ENCODE measurements at regions of chrX and their contacts with region 1.

Region 1: GRCh38 chrX:153971450-153972367 is at the start of gene HCFC1:
- DNase-seq: peak; percentile 92
- H3K4me3 Mint-ChIP-seq: peak within 1 kb of the TSS; percentile 100
- H3K27ac Mint-ChIP-seq: peak within 1 kb of the TSS; percentile 100
- H3K4me1 Mint-ChIP-seq: peaks cover 30% of the 10 kb centered on the region
- H3K27me3 Mint-ChIP-seq: no peaks in the 10 kb centered on the region
- total RNA-seq, gene HCFC1: 90.4 to 93.0 TPM

Region 2: DNA sequence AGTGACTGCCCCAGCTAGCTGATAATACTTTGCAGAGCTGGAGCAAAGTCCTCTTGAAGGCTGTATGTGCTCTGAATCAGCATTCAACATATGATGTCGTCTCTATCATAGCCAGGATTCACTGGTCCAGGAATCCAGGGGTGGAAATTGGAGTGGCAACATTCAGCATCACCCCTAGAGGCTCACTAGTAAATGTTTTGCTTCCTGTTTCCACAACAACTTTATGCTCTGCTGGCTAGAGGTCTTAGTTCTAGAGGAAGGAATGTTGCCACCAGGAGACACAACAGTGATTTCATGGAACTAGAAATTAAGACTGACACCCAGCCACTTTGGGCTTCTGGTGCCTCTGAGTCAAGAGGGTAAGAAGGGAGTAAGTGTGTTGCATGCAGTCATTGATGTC is 781.3 kb before region 1 on chrX:
- CTCF ChIA-PET with region 1: no interaction called
- POLR2A ChIA-PET with region 1: no interaction called
- intact Hi-C with region 1: no loop called
- DNase-seq: no peak
- H3K4me3 Mint-ChIP-seq: no peak overlapping the region
- H3K27ac Mint-ChIP-seq: no peak overlapping the region
- H3K4me1 Mint-ChIP-seq: no peaks in the 10 kb centered on the region
- H3K27me3 Mint-ChIP-seq: peaks cover 2% of the 10 kb centered on the region

Region 3: GRCh38 chrX:153724252-153725040 is 247.3 kb before region 1 on chrX and contains the starts of genes ABCD1 and BCAP31:
- CTCF ChIA-PET with region 1: no interaction called
- POLR2A ChIA-PET with region 1: no interaction called
- intact Hi-C with region 1: loop called (anchors 1 kb)
- DNase-seq: peak; percentile 91
- H3K4me3 Mint-ChIP-seq: peak within 1 kb of the TSS; percentile 86
- H3K27ac Mint-ChIP-seq: peak within 1 kb of the TSS; percentile 88
- H3K4me1 Mint-ChIP-seq: peaks cover 24% of the 10 kb centered on the region
- H3K27me3 Mint-ChIP-seq: no peaks in the 10 kb centered on the region
- total RNA-seq, gene ABCD1: 4.8 TPM
- total RNA-seq, gene BCAP31: 119 to 121 TPM

Region 4: GRCh38 chrX:153947009-153947769 is 24.5 kb before region 1 on chrX:
- CTCF ChIA-PET with region 1: interaction called, 31 read pairs
- POLR2A ChIA-PET with region 1: interaction called, 4 read pairs
- intact Hi-C with region 1: loop called (anchors 2 kb)
- DNase-seq: peak; percentile 85
- H3K4me3 Mint-ChIP-seq: no peak overlapping the region
- H3K27ac Mint-ChIP-seq: peak overlapping the region; percentile 82
- H3K4me1 Mint-ChIP-seq: peaks cover 7% of the 10 kb centered on the region
- H3K27me3 Mint-ChIP-seq: no peaks in the 10 kb centered on the region

Region 5: GRCh38 chrX:154002215-154002719 is 30.6 kb after region 1 on chrX:
- CTCF ChIA-PET with region 1: no interaction called
- POLR2A ChIA-PET with region 1: interaction called, 6 read pairs
- intact Hi-C with region 1: loop called (anchors 1 kb)
- DNase-seq: peak; percentile 70
- H3K4me3 Mint-ChIP-seq: peak overlapping the region; percentile 65
- H3K27ac Mint-ChIP-seq: peak overlapping the region; percentile 87
- H3K4me1 Mint-ChIP-seq: peaks cover 11% of the 10 kb centered on the region
- H3K27me3 Mint-ChIP-seq: no peaks in the 10 kb centered on the region

Region 6: DNA sequence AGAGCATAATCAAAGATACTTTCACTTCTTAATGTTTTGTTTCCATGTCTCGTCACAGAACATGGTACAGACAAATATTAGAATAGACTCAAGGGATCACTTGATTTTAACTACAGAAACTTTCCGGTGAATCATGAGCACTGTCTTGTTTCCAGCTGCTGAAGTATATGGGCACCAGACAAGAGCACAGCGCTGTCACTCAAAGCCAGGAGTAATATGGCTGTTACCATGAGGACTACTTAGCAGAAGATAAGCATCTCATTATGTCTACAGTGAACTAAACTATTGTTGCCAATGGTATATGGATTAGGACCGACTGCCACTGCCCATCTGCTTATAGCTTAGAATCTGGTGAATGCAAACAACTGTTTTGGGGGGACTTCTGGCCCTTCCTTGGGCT is 91.5 kb after region 1 on chrX:
- CTCF ChIA-PET with region 1: no interaction called
- POLR2A ChIA-PET with region 1: no interaction called
- intact Hi-C with region 1: no loop called
- DNase-seq: no peak
- H3K4me3 Mint-ChIP-seq: no peak overlapping the region
- H3K27ac Mint-ChIP-seq: peak overlapping the region; percentile 45
- H3K4me1 Mint-ChIP-seq: peaks cover 73% of the 10 kb centered on the region
- H3K27me3 Mint-ChIP-seq: no peaks in the 10 kb centered on the region

Region 7: DNA sequence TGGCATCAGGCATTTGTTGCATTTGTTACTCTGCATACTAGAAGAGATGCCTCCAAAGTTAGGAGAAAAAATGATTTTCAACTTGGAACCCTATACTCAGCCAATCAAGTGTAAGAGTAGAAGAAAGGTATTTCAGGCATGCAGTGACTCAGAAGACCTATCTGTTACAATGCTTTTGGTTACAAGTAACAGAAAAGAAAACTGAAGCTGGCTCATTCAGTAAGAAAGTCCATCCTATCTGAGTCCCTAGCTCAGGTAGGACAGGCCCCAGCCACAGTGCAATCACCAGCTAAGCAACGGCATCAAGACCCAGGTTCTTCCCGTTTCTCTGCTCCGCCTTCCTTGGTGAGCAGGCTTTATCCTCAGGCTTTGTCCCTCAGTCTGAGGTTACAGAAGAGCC is 102.5 kb after region 1 on chrX:
- CTCF ChIA-PET with region 1: no interaction called
- POLR2A ChIA-PET with region 1: no interaction called
- intact Hi-C with region 1: no loop called
- DNase-seq: no peak
- H3K4me3 Mint-ChIP-seq: no peak overlapping the region
- H3K27ac Mint-ChIP-seq: peak overlapping the region; percentile 45
- H3K4me1 Mint-ChIP-seq: peaks cover 57% of the 10 kb centered on the region
- H3K27me3 Mint-ChIP-seq: no peaks in the 10 kb centered on the region

Region 8: GRCh38 chrX:154097597-154098541 is 126.2 kb after region 1 on chrX and contains the start of gene MECP2:
- CTCF ChIA-PET with region 1: no interaction called
- POLR2A ChIA-PET with region 1: interaction called, 3 read pairs
- intact Hi-C with region 1: loop called (anchors 10 kb)
- DNase-seq: peak; percentile 93
- H3K4me3 Mint-ChIP-seq: peak within 1 kb of the TSS; percentile 98
- H3K27ac Mint-ChIP-seq: peak within 1 kb of the TSS; percentile 98
- H3K4me1 Mint-ChIP-seq: peaks cover 57% of the 10 kb centered on the region
- H3K27me3 Mint-ChIP-seq: no peaks in the 10 kb centered on the region
- total RNA-seq, gene MECP2: 50.8 to 51.0 TPM

Region 9: DNA sequence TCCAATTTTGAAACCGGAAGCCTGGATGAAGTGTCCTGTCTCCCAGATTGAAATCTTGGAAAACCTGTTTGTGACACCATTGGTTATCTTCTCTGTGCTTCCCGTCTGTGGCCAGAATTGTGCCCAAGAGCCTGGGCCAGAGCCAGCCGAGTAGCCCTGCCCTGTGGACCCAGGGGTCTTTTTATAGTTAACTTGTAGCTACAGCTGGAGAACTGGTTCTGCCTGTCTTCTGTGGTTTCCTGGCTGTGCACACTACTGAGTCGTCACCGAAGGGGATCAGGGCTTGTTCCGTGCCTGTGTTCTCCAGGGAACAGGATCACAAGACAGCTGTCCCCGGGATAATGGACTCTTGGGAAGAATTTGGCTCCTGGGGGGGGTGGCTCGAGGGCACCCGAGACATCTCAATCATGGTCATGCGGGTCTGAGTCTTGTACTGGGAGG is 150.2 kb after region 1 on chrX:
- CTCF ChIA-PET with region 1: no interaction called
- POLR2A ChIA-PET with region 1: no interaction called
- intact Hi-C with region 1: no loop called
- DNase-seq: no peak
- H3K4me3 Mint-ChIP-seq: no peak overlapping the region
- H3K27ac Mint-ChIP-seq: no peak overlapping the region
- H3K4me1 Mint-ChIP-seq: peaks cover 12% of the 10 kb centered on the region
- H3K27me3 Mint-ChIP-seq: no peaks in the 10 kb centered on the region